K562 (cell line): ENCODE measurements at regions of chr1 and their contacts with region 1.

Region 1: GRCh38 chr1:175373786-175374623 is 181.4 kb upstream of the KIAA0040 start:
- DNase-seq: peak; percentile 66 to 81 (median 76)
- ATAC-seq: peak; percentile 96
- H3K4me3 ChIP-seq: no peak overlapping the region
- H3K27ac ChIP-seq: no peak overlapping the region
- H3K4me1 ChIP-seq: no peaks in the 10 kb centered on the region
- H3K27me3 ChIP-seq: peaks cover 6 to 13% of the 10 kb centered on the region in 2 experiments
- CTCF ChIP-seq: peak; percentile 76 to 92 (median 83)
- EP300 ChIP-seq: no peak
- POLR2A ChIP-seq: no peak
- RAD21 ChIP-seq: peak; percentile 85 to 87

Region 2: GRCh38 chr1:175154629-175155472 is 219.2 kb before region 1 on chr1:
- CTCF ChIA-PET with region 1: no interaction called
- POLR2A ChIA-PET with region 1: no interaction called
- in situ Hi-C with region 1: no loop called
- intact Hi-C with region 1: loop called (anchors 5 kb)
- DNase-seq: peak; percentile 71 to 81 (median 80)
- ATAC-seq: peak; percentile 77
- H3K4me3 ChIP-seq: no peak overlapping the region
- H3K27ac ChIP-seq: no peak overlapping the region
- H3K4me1 ChIP-seq: no peaks in the 10 kb centered on the region
- H3K27me3 ChIP-seq: peaks cover 11 to 35% of the 10 kb centered on the region in 2 experiments
- CTCF ChIP-seq: peak; percentile 90 to 96 (median 95)
- EP300 ChIP-seq: no peak
- POLR2A ChIP-seq: no peak
- RAD21 ChIP-seq: peak; percentile 98 to 99

Region 3: GRCh38 chr1:175394739-175395138 is 20.7 kb after region 1 on chr1:
- CTCF ChIA-PET with region 1: no interaction called
- POLR2A ChIA-PET with region 1: no interaction called
- in situ Hi-C with region 1: no loop called
- intact Hi-C with region 1: no loop called
- DNase-seq: no peak
- ATAC-seq: no peak
- H3K4me3 ChIP-seq: no peak overlapping the region
- H3K27ac ChIP-seq: no peak overlapping the region
- H3K4me1 ChIP-seq: no peaks in the 10 kb centered on the region
- H3K27me3 ChIP-seq: peaks cover 0 to 8% of the 10 kb centered on the region in 2 experiments; a peak in 4 of 5 replicates
- CTCF ChIP-seq: no peak
- EP300 ChIP-seq: no peak
- POLR2A ChIP-seq: no peak
- RAD21 ChIP-seq: no peak

Region 4: DNA sequence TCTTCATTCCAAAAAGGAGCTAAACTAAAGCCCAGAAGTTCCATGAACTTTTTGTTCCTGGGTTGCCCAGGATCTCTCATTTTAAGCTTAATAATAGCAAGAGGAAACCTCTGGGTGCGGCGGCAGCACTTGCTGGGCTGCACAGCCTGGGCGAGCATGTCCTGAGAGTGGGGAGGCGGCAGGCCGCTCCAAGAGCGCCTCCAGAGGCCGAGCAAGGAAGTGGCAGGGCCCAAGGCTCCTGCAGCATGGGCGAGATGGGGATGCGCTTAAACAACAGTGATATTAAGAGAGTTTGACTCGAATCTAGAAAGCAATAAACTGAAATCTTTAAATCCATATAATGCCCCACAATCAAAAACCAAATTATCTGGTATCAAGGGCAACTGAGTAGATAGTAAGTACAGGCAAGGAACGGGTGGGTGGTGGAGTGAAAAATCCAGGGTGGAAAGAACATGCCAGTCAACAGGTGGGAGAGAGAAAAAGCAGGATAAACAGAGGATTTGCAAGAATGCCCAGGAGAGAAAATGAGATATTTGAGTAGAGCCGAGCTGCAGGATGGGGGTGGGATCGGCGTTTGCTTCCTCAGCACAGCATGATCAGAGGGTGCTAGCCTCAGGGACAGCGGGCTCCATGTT is 383.5 kb after region 1 on chr1:
- CTCF ChIA-PET with region 1: no interaction called
- POLR2A ChIA-PET with region 1: no interaction called
- in situ Hi-C with region 1: no loop called
- intact Hi-C with region 1: loop called (anchors 5 kb)
- DNase-seq: peak; percentile 68 to 86 (median 80)
- ATAC-seq: peak; percentile 100
- H3K4me3 ChIP-seq: no peak overlapping the region
- H3K27ac ChIP-seq: no peak overlapping the region
- H3K4me1 ChIP-seq: no peaks in the 10 kb centered on the region
- H3K27me3 ChIP-seq: peaks cover 2 to 24% of the 10 kb centered on the region in 2 experiments; a peak in 4 of 5 replicates
- CTCF ChIP-seq: peak; percentile 88 to 99 (median 89)
- EP300 ChIP-seq: no peak
- POLR2A ChIP-seq: no peak
- RAD21 ChIP-seq: peak; percentile 56 to 65

Region 5: DNA sequence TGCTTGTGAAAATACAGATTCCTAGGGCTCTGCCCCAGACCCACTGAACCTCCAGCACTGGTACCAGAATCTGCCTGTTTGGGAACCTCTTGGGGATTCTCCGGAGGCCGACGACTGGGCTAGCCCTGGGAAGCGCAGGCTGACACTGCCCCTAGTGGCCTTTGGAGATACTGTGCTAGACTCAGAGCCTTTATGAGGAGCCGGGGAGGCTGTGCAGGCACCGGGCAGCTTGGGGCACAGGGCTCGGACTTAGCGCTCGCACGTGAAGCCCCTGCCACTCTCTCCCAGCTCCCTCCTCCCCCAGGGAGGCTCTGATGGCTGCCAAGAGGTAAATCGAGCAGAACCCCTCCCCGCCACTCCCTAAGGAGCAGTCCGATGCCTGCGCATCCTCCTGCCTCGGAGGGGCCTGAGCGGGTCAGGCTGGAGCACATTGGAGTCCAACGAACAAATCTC is 514.0 kb after region 1 on chr1:
- CTCF ChIA-PET with region 1: interaction called, 3 read pairs
- POLR2A ChIA-PET with region 1: no interaction called
- in situ Hi-C with region 1: no loop called
- intact Hi-C with region 1: loop called (anchors 5 kb)
- DNase-seq: peak; percentile 74 to 83 (median 82)
- ATAC-seq: peak; percentile 99
- H3K4me3 ChIP-seq: no peak overlapping the region
- H3K27ac ChIP-seq: no peak overlapping the region
- H3K4me1 ChIP-seq: peaks cover 4 to 10% of the 10 kb centered on the region in 2 experiments; a peak in 4 of 5 replicates
- H3K27me3 ChIP-seq: peaks cover 15 to 61% of the 10 kb centered on the region in 2 experiments; a peak in 4 of 5 replicates
- CTCF ChIP-seq: peak; percentile 82 to 93 (median 83)
- EP300 ChIP-seq: no peak
- POLR2A ChIP-seq: no peak
- RAD21 ChIP-seq: peak; percentile 59 to 69

Region 6: DNA sequence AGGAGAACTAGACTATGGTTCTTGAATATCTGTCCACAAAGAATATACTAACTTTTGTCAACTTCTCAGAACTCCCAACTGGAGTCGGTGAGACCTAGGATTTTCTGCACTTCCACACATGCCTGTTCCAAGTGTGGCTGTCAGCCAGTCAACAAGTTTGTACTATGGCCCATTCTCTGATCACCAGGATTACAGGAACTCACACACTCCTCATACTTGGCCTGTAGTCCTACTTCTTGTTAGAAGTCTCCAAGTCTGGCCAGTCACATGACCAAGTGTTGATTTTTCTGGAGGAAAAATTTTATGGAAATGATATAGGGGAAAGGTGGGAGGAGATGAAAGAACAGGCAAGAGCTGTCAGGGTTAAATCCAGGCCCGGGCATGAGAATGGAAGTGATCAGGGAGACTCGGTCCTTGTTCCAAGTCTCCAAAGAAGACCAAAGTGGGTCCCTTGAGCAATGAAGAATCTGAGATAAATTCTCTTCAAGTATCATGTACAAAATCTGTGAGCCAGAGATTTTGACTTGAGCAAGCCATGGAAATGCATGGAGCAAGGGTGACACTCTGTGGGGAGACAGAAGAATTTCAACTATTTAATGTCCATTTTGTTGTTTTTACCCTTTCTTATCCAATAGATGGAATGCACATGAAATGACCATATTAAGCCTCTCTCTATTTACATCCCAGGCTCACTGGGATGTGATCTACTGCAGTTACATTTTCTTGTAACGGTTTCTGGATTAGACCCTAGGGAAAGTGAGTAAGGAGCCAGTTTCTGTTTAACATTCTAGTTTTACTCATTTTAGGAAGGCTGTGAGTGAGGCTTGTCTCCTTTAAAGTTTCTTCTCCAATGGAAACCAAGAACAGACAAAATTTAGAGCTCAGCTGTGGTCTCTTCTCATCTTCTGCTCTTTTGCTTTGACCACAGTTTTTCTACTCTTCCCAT is 1469.6 kb after region 1 on chr1:
- CTCF ChIA-PET with region 1: no interaction called
- POLR2A ChIA-PET with region 1: no interaction called
- in situ Hi-C with region 1: no loop called
- intact Hi-C with region 1: loop called (anchors 5 kb)
- DNase-seq: peak; percentile 19 to 67 (median 34)
- ATAC-seq: peak; percentile 71
- H3K4me3 ChIP-seq: no peak overlapping the region
- H3K27ac ChIP-seq: no peak overlapping the region
- H3K4me1 ChIP-seq: peaks cover 0 to 10% of the 10 kb centered on the region in 2 experiments; a peak in 3 of 5 replicates
- H3K27me3 ChIP-seq: peaks cover 4 to 6% of the 10 kb centered on the region in 2 experiments; a peak in 3 of 5 replicates
- CTCF ChIP-seq: peak; percentile 54 to 87 (median 62); a peak in 5 of 6 replicates
- EP300 ChIP-seq: no peak
- POLR2A ChIP-seq: no peak
- RAD21 ChIP-seq: peak; percentile 94 to 95